Right ventricle myocardium superior (tissue), 1 donor: ENCODE measurements at regions of chr10 and their contacts with region 1.

Region 1: DNA sequence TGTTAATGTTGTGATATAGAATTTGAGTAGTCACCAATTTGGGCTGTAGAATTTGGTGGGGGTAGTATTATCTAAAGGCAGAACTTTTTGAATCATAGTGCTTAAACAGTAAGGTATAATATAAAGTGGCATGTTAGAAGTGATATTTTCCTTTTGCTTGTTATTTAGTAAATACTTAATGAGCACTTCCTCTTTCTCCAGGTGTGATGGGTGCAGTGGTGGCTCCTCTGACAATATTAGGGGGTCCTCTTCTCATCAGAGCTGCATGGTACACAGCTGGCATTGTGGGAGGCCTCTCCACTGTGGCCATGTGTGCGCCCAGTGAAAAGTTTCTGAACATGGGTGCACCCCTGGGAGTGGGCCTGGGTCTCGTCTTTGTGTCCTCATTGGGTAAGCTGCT is 10.5 kb downstream of the GHITM start:
- DNase-seq: no peak
- ATAC-seq: no peak

Region 2: GRCh38 chr10:84205049-84205852 is 55.4 kb after region 1 on chr10:
- intact Hi-C with region 1: loop called (anchors 2 kb)
- DNase-seq: peak; percentile 67
- ATAC-seq: peak; percentile 82

Region 3: DNA sequence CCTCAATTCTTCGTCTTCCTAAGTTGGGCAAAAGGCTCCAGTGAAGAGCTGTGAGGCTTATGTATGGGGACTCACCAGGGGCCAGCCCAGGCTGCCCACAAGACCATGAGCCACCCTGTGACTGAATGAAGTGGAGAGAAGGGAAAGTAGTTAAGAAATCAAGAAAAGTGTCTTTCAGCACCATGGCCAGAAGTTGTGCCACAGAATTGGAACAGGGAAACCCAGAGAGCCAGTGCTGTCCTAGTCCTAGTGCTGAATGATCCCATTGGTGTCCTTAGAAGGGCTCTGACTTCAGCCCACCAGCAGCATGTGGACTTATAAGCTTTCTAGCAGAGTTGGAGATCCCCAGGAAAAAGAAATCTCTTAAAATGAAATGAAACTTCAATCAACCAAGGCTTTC is 141.5 kb after region 1 on chr10:
- intact Hi-C with region 1: no loop called
- DNase-seq: no peak
- ATAC-seq: no peak